ENCODE measurements at regions of chr5 and their contacts with region 1.

Region 1: DNA sequence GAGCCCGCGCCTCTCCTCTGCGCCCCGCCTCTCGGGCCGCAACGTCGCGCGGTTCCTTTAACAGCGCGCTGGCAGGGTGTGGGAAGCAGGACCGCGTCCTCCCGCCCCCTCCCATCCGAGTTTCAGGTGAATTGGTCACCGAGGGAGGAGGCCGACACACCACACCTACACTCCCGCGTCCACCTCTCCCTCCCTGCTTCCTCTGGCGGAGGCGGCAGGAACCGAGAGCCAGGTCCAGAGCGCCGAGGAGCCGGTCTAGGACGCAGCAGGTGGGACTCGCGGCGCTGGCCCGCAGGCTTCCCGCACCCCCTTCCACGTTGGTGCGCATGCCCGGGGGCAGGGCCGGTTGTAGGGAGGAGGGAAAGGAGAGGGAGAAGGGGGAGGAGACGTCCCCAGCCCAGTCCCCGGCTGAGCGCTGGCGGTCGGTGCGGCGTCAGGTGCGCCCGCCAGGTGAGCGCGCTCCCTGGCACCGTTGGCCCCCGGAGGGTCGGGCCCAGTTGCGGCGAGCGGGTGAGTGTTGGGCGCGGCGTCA is at the start of gene OCLN:
- DNase-seq: peak; percentile 39
- H3K4me3 Mint-ChIP-seq: peak within 1 kb of the TSS; percentile 73
- H3K27ac Mint-ChIP-seq: no peak within 1 kb of the TSS
- H3K4me1 Mint-ChIP-seq: peaks cover 7% of the 10 kb centered on the region
- H3K27me3 Mint-ChIP-seq: peaks cover 50% of the 10 kb centered on the region
- total RNA-seq, gene OCLN: 0.68 to 0.83 TPM

Region 2: DNA sequence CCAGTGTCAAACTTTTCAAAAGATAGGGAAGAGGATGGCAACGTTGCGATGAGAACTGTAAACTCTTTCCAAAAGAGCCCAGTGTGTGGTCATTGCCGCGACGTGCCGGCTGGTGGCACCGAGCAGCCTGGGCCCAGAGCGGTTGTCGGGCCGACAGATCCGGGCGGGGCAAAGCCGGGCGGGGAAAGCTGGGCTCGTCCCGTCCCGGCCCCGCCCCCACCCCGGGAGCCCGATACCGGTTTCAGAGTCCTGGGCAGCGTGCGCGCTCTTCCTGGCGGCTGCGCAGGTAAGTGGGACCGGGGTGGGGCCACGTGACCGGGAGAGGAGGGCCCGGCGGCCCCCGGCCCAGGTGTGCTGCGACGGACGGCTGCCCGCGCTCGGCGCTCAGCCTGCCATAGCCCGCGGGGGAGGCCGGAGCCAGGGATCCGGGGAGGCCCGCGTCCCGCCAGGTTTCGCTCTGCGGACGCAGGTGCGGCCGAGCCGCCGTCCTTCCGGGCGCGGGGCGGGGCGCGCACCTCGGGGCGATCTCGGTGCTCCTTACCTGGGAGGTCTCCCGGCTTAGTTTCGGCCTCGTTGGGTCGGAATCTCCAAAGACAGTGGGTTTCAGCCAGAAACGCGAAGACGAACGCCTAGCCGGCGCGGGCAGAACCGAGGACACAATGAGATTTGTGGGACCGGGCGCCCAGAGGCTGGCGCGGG is 77.4 kb before region 1 on chr5 and contains the start of gene MARVELD2:
- CTCF ChIA-PET with region 1: no interaction called
- POLR2A ChIA-PET with region 1: no interaction called
- intact Hi-C with region 1: loop called (anchors 10 kb)
- DNase-seq: peak; percentile 61
- H3K4me3 Mint-ChIP-seq: peak within 1 kb of the TSS; percentile 54
- H3K27ac Mint-ChIP-seq: no peak within 1 kb of the TSS
- H3K4me1 Mint-ChIP-seq: peaks cover 2% of the 10 kb centered on the region
- H3K27me3 Mint-ChIP-seq: no peaks in the 10 kb centered on the region
- total RNA-seq, gene MARVELD2: 0.31 to 0.40 TPM

Region 3: DNA sequence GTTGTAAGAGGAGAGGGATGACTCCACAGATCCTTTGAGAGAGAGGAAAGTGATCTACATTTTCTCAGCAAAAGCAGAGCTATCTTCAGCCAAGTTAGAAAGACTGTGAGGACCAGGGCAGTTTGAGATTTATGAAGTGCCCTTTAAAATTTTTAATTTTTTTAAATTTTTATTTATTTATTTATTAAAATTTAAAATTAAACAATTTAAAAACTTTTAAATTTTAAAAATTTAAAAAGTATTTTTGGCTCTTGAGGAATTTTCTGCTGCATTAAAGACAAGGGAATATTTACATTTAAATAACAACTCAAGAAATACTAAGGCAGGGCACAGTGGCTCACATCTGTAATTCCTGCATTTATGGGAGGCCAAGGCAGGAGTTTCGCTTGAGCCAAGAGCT is 30.3 kb before region 1 on chr5:
- CTCF ChIA-PET with region 1: no interaction called
- POLR2A ChIA-PET with region 1: no interaction called
- intact Hi-C with region 1: no loop called
- DNase-seq: no peak
- H3K4me3 Mint-ChIP-seq: no peak overlapping the region
- H3K27ac Mint-ChIP-seq: no peak overlapping the region
- H3K4me1 Mint-ChIP-seq: no peaks in the 10 kb centered on the region
- H3K27me3 Mint-ChIP-seq: peaks cover 3% of the 10 kb centered on the region

Region 4: GRCh38 chr5:69477170-69477569 is 15.3 kb before region 1 on chr5:
- CTCF ChIA-PET with region 1: no interaction called
- POLR2A ChIA-PET with region 1: no interaction called
- intact Hi-C with region 1: no loop called
- DNase-seq: no peak
- H3K4me3 Mint-ChIP-seq: no peak overlapping the region
- H3K27ac Mint-ChIP-seq: no peak overlapping the region
- H3K4me1 Mint-ChIP-seq: no peaks in the 10 kb centered on the region
- H3K27me3 Mint-ChIP-seq: no peaks in the 10 kb centered on the region

Measured in activated CD4-positive, alpha-beta memory T cell treated with anti-CD3 and anti-CD28 coated beads for 36 hours (primary cell).